Aorta (tissue), 5 donors: ENCODE measurements at regions of chr19 and their contacts with region 1.

Region 1: GRCh38 chr19:43784981-43785808 is 4.4 kb upstream of the KCNN4 start:
- DNase-seq: peak; percentile 70
- ATAC-seq: peak; percentile 89
- H3K4me3 ChIP-seq: no peak overlapping the region
- H3K27ac ChIP-seq: no peak overlapping the region
- H3K4me1 ChIP-seq: no peaks in the 10 kb centered on the region
- H3K27me3 ChIP-seq: no peaks in the 10 kb centered on the region

Region 2: GRCh38 chr19:43504426-43505185 is 280.6 kb before region 1 on chr19 and contains the start of gene PHLDB3:
- intact Hi-C with region 1: no loop called
- DNase-seq: peak in 1 of 2 donors; percentile 85
- ATAC-seq: peak; percentile 71
- H3K4me3 ChIP-seq: peak within 1 kb of the TSS; percentile 53 to 84
- H3K27ac ChIP-seq: peak within 1 kb of the TSS in 1 of 2 donors; percentile 69
- H3K4me1 ChIP-seq: no peaks in the 10 kb centered on the region
- H3K27me3 ChIP-seq: no peaks in the 10 kb centered on the region
- total RNA-seq, gene PHLDB3: 9.7 to 10.2 TPM

Region 3: DNA sequence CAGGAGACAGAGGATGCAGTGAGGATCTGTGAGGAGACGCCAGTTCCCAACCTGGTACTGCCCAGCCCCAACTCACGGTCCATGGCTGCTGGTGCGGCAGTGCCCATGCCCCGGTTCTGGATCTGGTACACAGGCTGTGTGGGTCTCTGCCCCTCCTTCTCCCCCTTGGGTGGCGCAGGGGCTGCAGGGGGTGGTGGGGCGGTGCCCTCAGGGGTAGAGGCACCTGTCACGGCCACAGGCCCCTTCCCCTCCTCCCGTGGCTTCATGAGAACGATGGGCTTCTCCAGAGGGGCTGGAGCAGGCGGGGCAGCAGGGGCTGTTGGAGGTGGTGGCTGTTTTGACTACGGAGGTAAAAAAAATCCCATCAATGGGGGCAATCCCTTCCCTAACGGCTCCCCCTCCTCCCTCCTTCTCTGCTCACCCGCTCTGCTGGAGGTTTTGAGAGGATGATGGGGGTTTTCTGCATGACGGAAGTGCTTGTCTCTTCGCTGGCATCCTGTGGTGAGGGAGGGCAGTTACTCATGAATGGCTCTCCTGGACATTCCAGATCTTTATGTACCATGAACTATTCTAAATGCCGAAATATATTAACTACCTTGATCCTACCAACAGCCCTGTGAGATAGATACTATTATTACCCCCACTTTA is 37.5 kb before region 1 on chr19:
- intact Hi-C with region 1: loop called (anchors 2 kb)
- DNase-seq: no peak
- ATAC-seq: no peak
- H3K4me3 ChIP-seq: no peak overlapping the region
- H3K27ac ChIP-seq: no peak overlapping the region
- H3K4me1 ChIP-seq: peaks cover 0 to 3% of the 10 kb centered on the region in 2 donors
- H3K27me3 ChIP-seq: no peaks in the 10 kb centered on the region

Region 4: DNA sequence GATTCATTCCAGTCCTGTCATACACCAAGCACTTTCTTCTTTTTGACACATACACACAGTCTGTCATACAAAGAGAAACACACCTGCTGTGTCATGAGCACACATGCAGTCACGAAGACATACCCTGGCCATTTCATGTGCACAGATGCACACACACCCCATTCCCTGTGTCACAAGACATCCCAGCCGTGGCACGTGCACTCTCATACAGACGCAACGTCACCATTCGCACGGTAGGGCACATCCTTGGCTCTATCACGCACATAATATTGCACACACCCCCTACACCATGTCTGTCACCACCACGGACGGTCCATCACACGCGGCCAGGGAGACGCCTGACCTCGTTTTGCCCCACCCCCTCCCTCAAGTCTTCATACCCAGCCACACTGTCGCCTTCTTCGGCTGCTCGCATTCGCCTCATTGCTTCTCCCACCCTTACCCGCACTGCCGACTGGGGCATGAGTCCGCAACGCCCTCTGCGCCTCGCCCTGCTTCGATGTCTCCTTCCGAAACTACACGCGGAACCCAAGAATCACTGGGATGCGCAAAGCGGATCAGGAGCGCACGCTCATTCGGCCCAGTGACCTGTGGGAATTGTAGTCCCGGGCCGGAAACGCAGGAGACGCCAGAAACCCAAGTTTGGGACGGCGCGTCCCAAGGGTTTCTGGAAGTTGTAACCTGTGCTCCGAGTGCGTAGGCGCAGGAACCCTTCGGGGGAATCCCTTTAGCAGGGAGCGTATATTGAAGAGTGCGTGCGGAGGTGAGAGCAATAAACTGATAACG is 35.1 kb after region 1 on chr19:
- intact Hi-C with region 1: no loop called
- DNase-seq: peak; percentile 69 to 79
- ATAC-seq: peak; percentile 52
- H3K4me3 ChIP-seq: no peak overlapping the region
- H3K27ac ChIP-seq: no peak overlapping the region
- H3K4me1 ChIP-seq: no peaks in the 10 kb centered on the region
- H3K27me3 ChIP-seq: no peaks in the 10 kb centered on the region